IMR-90 (cell line): ENCODE measurements at regions of chr18 and their contacts with region 1.

Region 1: DNA sequence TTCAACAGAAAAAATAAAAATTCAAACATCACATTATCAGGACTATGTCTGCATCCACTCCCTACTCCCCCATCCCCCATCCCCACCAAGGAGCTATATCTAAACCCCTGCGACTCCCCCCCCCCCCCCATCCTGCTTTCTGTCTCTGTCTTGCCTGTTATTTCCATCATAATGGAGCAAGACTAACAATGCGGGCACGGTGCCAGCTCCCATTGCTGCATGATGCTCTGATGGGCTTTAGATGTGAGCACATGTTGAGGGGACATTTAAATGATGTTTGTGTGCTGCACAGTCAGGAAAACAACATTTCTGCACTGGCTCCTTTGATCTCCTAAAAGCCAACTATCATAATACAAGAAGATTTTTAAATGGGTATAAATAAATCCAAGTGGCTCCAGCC is 644.2 kb upstream of the SETBP1 start:
- DNase-seq: no peak
- ATAC-seq: no peak
- H3K4me3 ChIP-seq: no peak overlapping the region
- H3K27ac ChIP-seq: no peak overlapping the region
- H3K4me1 ChIP-seq: no peaks in the 10 kb centered on the region
- H3K27me3 ChIP-seq: no peaks in the 10 kb centered on the region
- CTCF ChIP-seq: no peak
- POLR2A ChIP-seq: no peak
- RAD21 ChIP-seq: no peak

Region 2: DNA sequence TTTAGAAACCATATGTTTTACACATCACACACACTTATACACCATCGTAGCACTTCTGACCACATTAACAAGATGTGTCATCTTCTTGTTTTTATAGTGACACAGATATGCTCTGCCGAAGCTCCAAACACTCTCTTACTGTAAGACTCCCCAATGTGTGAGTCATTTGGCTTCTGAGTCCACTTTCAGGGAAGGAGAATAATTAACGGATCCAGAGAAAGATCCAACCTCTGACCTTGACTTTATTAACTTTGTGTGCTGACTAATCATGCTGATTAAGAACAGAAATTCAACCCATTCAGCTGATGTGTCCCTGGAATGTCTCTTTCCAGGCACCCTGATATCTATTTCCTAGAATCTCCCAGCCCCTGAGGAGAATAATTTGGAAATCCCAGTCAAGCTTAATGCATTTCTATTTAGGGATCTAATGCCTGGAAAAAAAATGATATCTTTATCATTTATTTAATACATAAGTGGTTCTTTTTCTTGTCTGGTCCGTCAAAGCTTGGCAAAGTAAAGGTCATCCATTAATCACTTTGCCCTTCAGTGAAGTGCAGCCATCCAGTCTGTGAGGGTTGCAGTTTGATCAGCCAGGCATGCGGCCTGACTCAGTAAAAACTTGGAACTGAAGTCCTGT is 143.4 kb before region 1 on chr18:
- CTCF ChIA-PET with region 1: no interaction called
- POLR2A ChIA-PET with region 1: no interaction called
- dilution Hi-C with region 1: no loop called
- in situ Hi-C with region 1: no loop called
- intact Hi-C with region 1: no loop called
- DNase-seq: peak; percentile 92
- ATAC-seq: peak; percentile 96
- H3K4me3 ChIP-seq: no peak overlapping the region
- H3K27ac ChIP-seq: no peak overlapping the region
- H3K4me1 ChIP-seq: no peaks in the 10 kb centered on the region
- H3K27me3 ChIP-seq: no peaks in the 10 kb centered on the region
- CTCF ChIP-seq: no peak
- POLR2A ChIP-seq: no peak
- RAD21 ChIP-seq: no peak

Region 3: GRCh38 chr18:44067186-44067585 is 30.7 kb after region 1 on chr18:
- CTCF ChIA-PET with region 1: no interaction called
- POLR2A ChIA-PET with region 1: no interaction called
- dilution Hi-C with region 1: no loop called
- in situ Hi-C with region 1: no loop called
- intact Hi-C with region 1: loop called (anchors 1 kb)
- DNase-seq: no peak
- ATAC-seq: no peak
- H3K4me3 ChIP-seq: no peak overlapping the region
- H3K27ac ChIP-seq: no peak overlapping the region
- H3K4me1 ChIP-seq: no peaks in the 10 kb centered on the region
- H3K27me3 ChIP-seq: no peaks in the 10 kb centered on the region
- CTCF ChIP-seq: no peak
- POLR2A ChIP-seq: no peak
- RAD21 ChIP-seq: no peak

Region 4: GRCh38 chr18:44098551-44099098 is 62.1 kb after region 1 on chr18:
- CTCF ChIA-PET with region 1: interaction called, 3 read pairs
- POLR2A ChIA-PET with region 1: no interaction called
- dilution Hi-C with region 1: no loop called
- in situ Hi-C with region 1: no loop called
- intact Hi-C with region 1: loop called (anchors 10 kb)
- DNase-seq: peak; percentile 17
- ATAC-seq: peak; percentile 77; the same call in 1 of the 2 replicates
- H3K4me3 ChIP-seq: no peak overlapping the region
- H3K27ac ChIP-seq: no peak overlapping the region
- H3K4me1 ChIP-seq: no peaks in the 10 kb centered on the region
- H3K27me3 ChIP-seq: no peaks in the 10 kb centered on the region
- CTCF ChIP-seq: no peak
- POLR2A ChIP-seq: no peak
- RAD21 ChIP-seq: no peak

Region 5: GRCh38 chr18:44298566-44298965 is 262.1 kb after region 1 on chr18:
- CTCF ChIA-PET with region 1: no interaction called
- POLR2A ChIA-PET with region 1: no interaction called
- dilution Hi-C with region 1: no loop called
- in situ Hi-C with region 1: no loop called
- intact Hi-C with region 1: loop called (anchors 5 kb)
- DNase-seq: no peak
- ATAC-seq: no peak
- H3K4me3 ChIP-seq: no peak overlapping the region
- H3K27ac ChIP-seq: no peak overlapping the region
- H3K4me1 ChIP-seq: no peaks in the 10 kb centered on the region
- H3K27me3 ChIP-seq: no peaks in the 10 kb centered on the region
- CTCF ChIP-seq: no peak
- POLR2A ChIP-seq: no peak
- RAD21 ChIP-seq: no peak

Region 6: DNA sequence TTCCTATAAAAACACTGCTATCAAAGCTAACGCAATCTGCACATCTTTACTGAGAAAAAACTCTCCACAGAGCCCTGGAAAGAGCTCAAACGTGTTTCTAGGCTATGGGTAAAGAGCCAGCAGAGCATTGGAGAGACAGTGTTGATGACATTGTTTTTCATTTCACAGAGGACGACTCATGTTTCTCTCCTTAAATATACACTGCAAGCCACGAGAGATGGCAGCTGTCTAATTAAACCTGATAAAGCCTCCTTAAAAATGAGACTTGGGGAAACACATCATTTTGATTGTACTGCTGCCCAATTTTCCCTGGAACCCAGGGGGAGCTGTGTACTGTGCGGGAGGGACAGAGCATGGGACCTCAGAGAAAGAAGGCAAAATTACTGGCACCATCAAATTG is 349.9 kb after region 1 on chr18:
- CTCF ChIA-PET with region 1: no interaction called
- POLR2A ChIA-PET with region 1: no interaction called
- dilution Hi-C with region 1: no loop called
- in situ Hi-C with region 1: no loop called
- intact Hi-C with region 1: no loop called
- DNase-seq: no peak
- ATAC-seq: no peak
- H3K4me3 ChIP-seq: no peak overlapping the region
- H3K27ac ChIP-seq: no peak overlapping the region
- H3K4me1 ChIP-seq: no peaks in the 10 kb centered on the region
- H3K27me3 ChIP-seq: no peaks in the 10 kb centered on the region
- CTCF ChIP-seq: no peak
- POLR2A ChIP-seq: no peak
- RAD21 ChIP-seq: no peak